Colonic mucosa (tissue), 4 donors: ENCODE measurements at regions of chr6 and their contacts with region 1.

Region 1: GRCh38 chr6:136792410-136793262 is at the start of gene MAP3K5:
- DNase-seq: peak; percentile 97
- H3K4me3 ChIP-seq: peak within 1 kb of the TSS; percentile 90
- H3K27ac ChIP-seq: peak within 1 kb of the TSS; percentile 98
- H3K4me1 ChIP-seq: no peaks in the 10 kb centered on the region
- H3K27me3 ChIP-seq: no peaks in the 10 kb centered on the region
- CTCF ChIP-seq: peak; percentile 86
- total RNA-seq, gene MAP3K5: 15.3 to 17.1 TPM

Region 2: GRCh38 chr6:136582711-136583471 is 209.7 kb before region 1 on chr6:
- intact Hi-C with region 1: loop called (anchors 5 kb)
- DNase-seq: no peak
- H3K4me3 ChIP-seq: no peak overlapping the region
- H3K27ac ChIP-seq: no peak overlapping the region
- H3K4me1 ChIP-seq: no peaks in the 10 kb centered on the region
- H3K27me3 ChIP-seq: no peaks in the 10 kb centered on the region
- CTCF ChIP-seq: peak; percentile 59

Region 3: GRCh38 chr6:136643850-136644596 is 148.6 kb before region 1 on chr6:
- intact Hi-C with region 1: loop called (anchors 2 kb)
- DNase-seq: peak; percentile 96
- H3K4me3 ChIP-seq: no peak overlapping the region
- H3K27ac ChIP-seq: no peak overlapping the region
- H3K4me1 ChIP-seq: no peaks in the 10 kb centered on the region
- H3K27me3 ChIP-seq: no peaks in the 10 kb centered on the region
- CTCF ChIP-seq: peak; percentile 83